ENCODE measurements at regions of chr15 and their contacts with region 1.

Region 1: GRCh38 chr15:90233376-90234095 is at the start of gene CIB1:
- DNase-seq: peak in 7 of 9 donors; percentile 91 to 97 (median 95)
- ATAC-seq: peak; percentile 89
- H3K4me3 ChIP-seq: peak within 1 kb of the TSS; percentile 92
- H3K4me3 Mint-ChIP-seq: peak within 1 kb of the TSS; percentile 87 to 95 (median 92)
- H3K27ac ChIP-seq: peak within 1 kb of the TSS; percentile 99
- H3K27ac Mint-ChIP-seq: peak within 1 kb of the TSS; percentile 96 to 100 (median 98)
- H3K4me1 ChIP-seq: peaks cover 39 to 43% of the 10 kb centered on the region in 2 donors
- H3K4me1 Mint-ChIP-seq: peaks cover 40 to 67% (median 57%) of the 10 kb centered on the region in 7 donors
- H3K27me3 ChIP-seq: no peaks in the 10 kb centered on the region
- H3K27me3 Mint-ChIP-seq: no peaks in the 10 kb centered on the region
- total RNA-seq, gene CIB1: 76.8 to 149 (median 127) TPM

Region 2: GRCh38 chr15:89845305-89845893 is 388.1 kb before region 1 on chr15:
- CTCF ChIA-PET with region 1: no interaction called
- POLR2A ChIA-PET with region 1: no interaction called
- intact Hi-C with region 1: no loop called
- DNase-seq: no peak
- ATAC-seq: no peak
- H3K4me3 ChIP-seq: no peak overlapping the region
- H3K4me3 Mint-ChIP-seq: no peak overlapping the region
- H3K27ac ChIP-seq: no peak overlapping the region
- H3K27ac Mint-ChIP-seq: peak overlapping the region in 1 of 9 donors; percentile 18
- H3K4me1 ChIP-seq: no peaks in the 10 kb centered on the region
- H3K4me1 Mint-ChIP-seq: peaks cover 0 to 13% (median 4%) of the 10 kb centered on the region in 7 donors
- H3K27me3 ChIP-seq: no peaks in the 10 kb centered on the region
- H3K27me3 Mint-ChIP-seq: no peaks in the 10 kb centered on the region

Region 3: GRCh38 chr15:90101969-90102890 is 131.3 kb before region 1 on chr15 and contains the start of gene IDH2:
- CTCF ChIA-PET with region 1: no interaction called
- POLR2A ChIA-PET with region 1: interaction called, 14 read pairs
- intact Hi-C with region 1: loop called (anchors 1 kb)
- DNase-seq: peak; percentile 60 to 86 (median 74)
- ATAC-seq: peak; percentile 89
- H3K4me3 ChIP-seq: peak within 1 kb of the TSS; percentile 78
- H3K4me3 Mint-ChIP-seq: peak within 1 kb of the TSS; percentile 82 to 97 (median 92)
- H3K27ac ChIP-seq: peak within 1 kb of the TSS; percentile 90
- H3K27ac Mint-ChIP-seq: peak within 1 kb of the TSS; percentile 94 to 99 (median 98)
- H3K4me1 ChIP-seq: peaks cover 38 to 44% of the 10 kb centered on the region in 2 donors
- H3K4me1 Mint-ChIP-seq: peaks cover 43 to 60% (median 52%) of the 10 kb centered on the region in 7 donors
- H3K27me3 ChIP-seq: no peaks in the 10 kb centered on the region
- H3K27me3 Mint-ChIP-seq: peaks cover 0 to 24% (median 0%) of the 10 kb centered on the region in 5 donors
- total RNA-seq, gene IDH2: 32.4 to 230 (median 33.7) TPM

Region 4: GRCh38 chr15:90191794-90192509 is 41.6 kb before region 1 on chr15:
- CTCF ChIA-PET with region 1: interaction called, 4 read pairs
- POLR2A ChIA-PET with region 1: interaction called, 32 read pairs
- intact Hi-C with region 1: loop called in 1 of 2 experiments (anchors 1 kb)
- DNase-seq: peak; percentile 17 to 56 (median 53)
- ATAC-seq: peak; percentile 83
- H3K4me3 ChIP-seq: no peak overlapping the region
- H3K4me3 Mint-ChIP-seq: peak overlapping the region; percentile 78 to 88 (median 82)
- H3K27ac ChIP-seq: peak overlapping the region; percentile 9
- H3K27ac Mint-ChIP-seq: peak overlapping the region; percentile 75 to 95 (median 85)
- H3K4me1 ChIP-seq: peaks cover 7 to 21% of the 10 kb centered on the region in 2 donors
- H3K4me1 Mint-ChIP-seq: peaks cover 22 to 54% (median 31%) of the 10 kb centered on the region in 7 donors
- H3K27me3 ChIP-seq: no peaks in the 10 kb centered on the region
- H3K27me3 Mint-ChIP-seq: no peaks in the 10 kb centered on the region

Region 5: GRCh38 chr15:90243943-90244639 is 10.6 kb after region 1 on chr15:
- CTCF ChIA-PET with region 1: no interaction called
- POLR2A ChIA-PET with region 1: interaction called, 34 read pairs
- intact Hi-C with region 1: loop called (anchors 1 kb)
- DNase-seq: no peak
- ATAC-seq: no peak
- H3K4me3 ChIP-seq: no peak overlapping the region
- H3K4me3 Mint-ChIP-seq: no peak overlapping the region
- H3K27ac ChIP-seq: no peak overlapping the region
- H3K27ac Mint-ChIP-seq: peak overlapping the region in 4 of 9 donors; percentile 6 to 75 (median 36)
- H3K4me1 ChIP-seq: no peaks in the 10 kb centered on the region
- H3K4me1 Mint-ChIP-seq: peaks cover 5 to 16% (median 9%) of the 10 kb centered on the region in 7 donors
- H3K27me3 ChIP-seq: no peaks in the 10 kb centered on the region
- H3K27me3 Mint-ChIP-seq: no peaks in the 10 kb centered on the region

Region 6: GRCh38 chr15:90286678-90287077 is 53.1 kb after region 1 on chr15:
- CTCF ChIA-PET with region 1: no interaction called
- POLR2A ChIA-PET with region 1: no interaction called
- intact Hi-C with region 1: no loop called
- DNase-seq: peak in 7 of 9 donors; percentile 39 to 68 (median 61)
- ATAC-seq: peak; percentile 88
- H3K4me3 ChIP-seq: no peak overlapping the region
- H3K4me3 Mint-ChIP-seq: no peak overlapping the region
- H3K27ac ChIP-seq: no peak overlapping the region
- H3K27ac Mint-ChIP-seq: no peak overlapping the region
- H3K4me1 ChIP-seq: no peaks in the 10 kb centered on the region
- H3K4me1 Mint-ChIP-seq: peaks cover 0 to 5% (median 0%) of the 10 kb centered on the region in 7 donors
- H3K27me3 ChIP-seq: no peaks in the 10 kb centered on the region
- H3K27me3 Mint-ChIP-seq: peaks cover 0 to 10% (median 0%) of the 10 kb centered on the region in 5 donors

Region 7: DNA sequence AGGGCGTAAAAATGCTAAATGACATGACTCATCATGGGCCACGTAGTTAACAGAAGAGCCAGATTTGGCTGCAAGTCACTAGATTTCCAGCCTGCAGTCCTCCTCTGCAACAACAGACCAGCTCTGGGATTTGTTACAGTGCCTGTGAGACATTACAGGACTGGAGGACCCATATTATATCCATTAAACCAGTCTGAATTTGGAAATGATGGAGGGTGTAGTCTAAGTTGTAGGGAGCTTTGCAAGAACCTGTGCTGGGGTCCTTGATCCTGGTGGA is 129.3 kb after region 1 on chr15:
- CTCF ChIA-PET with region 1: no interaction called
- POLR2A ChIA-PET with region 1: no interaction called
- intact Hi-C with region 1: loop called in 1 of 2 experiments (anchors 5 kb)
- DNase-seq: no peak
- ATAC-seq: no peak
- H3K4me3 ChIP-seq: no peak overlapping the region
- H3K4me3 Mint-ChIP-seq: peak overlapping the region in 1 of 10 donors; percentile 44
- H3K27ac ChIP-seq: no peak overlapping the region
- H3K27ac Mint-ChIP-seq: no peak overlapping the region
- H3K4me1 ChIP-seq: peaks cover 6 to 13% of the 10 kb centered on the region in 2 donors
- H3K4me1 Mint-ChIP-seq: peaks cover 11 to 35% (median 34%) of the 10 kb centered on the region in 7 donors
- H3K27me3 ChIP-seq: no peaks in the 10 kb centered on the region
- H3K27me3 Mint-ChIP-seq: no peaks in the 10 kb centered on the region

Region 8: GRCh38 chr15:91196769-91197168 is 963.2 kb after region 1 on chr15:
- CTCF ChIA-PET with region 1: no interaction called
- POLR2A ChIA-PET with region 1: no interaction called
- intact Hi-C with region 1: no loop called
- DNase-seq: no peak
- ATAC-seq: no peak
- H3K4me3 ChIP-seq: no peak overlapping the region
- H3K4me3 Mint-ChIP-seq: no peak overlapping the region
- H3K27ac ChIP-seq: no peak overlapping the region
- H3K27ac Mint-ChIP-seq: no peak overlapping the region
- H3K4me1 ChIP-seq: no peaks in the 10 kb centered on the region
- H3K4me1 Mint-ChIP-seq: no peaks in the 10 kb centered on the region
- H3K27me3 ChIP-seq: no peaks in the 10 kb centered on the region
- H3K27me3 Mint-ChIP-seq: peaks cover 12 to 25% (median 24%) of the 10 kb centered on the region in 5 donors